MCF 10A (cell line): ENCODE measurements at regions of chr4 and their contacts with region 1.

Region 1: GRCh38 chr4:1792832-1793495 is at the start of gene FGFR3:
- DNase-seq: peak; percentile 41
- H3K4me3 Mint-ChIP-seq: peak within 1 kb of the TSS; percentile 39
- H3K27ac Mint-ChIP-seq: no peak within 1 kb of the TSS
- H3K4me1 Mint-ChIP-seq: peaks cover 9% of the 10 kb centered on the region
- H3K27me3 Mint-ChIP-seq: no peaks in the 10 kb centered on the region
- CTCF ChIP-seq: no peak
- total RNA-seq, gene FGFR3: 2.5 and 6.5 TPM in 2 replicates

Region 2: DNA sequence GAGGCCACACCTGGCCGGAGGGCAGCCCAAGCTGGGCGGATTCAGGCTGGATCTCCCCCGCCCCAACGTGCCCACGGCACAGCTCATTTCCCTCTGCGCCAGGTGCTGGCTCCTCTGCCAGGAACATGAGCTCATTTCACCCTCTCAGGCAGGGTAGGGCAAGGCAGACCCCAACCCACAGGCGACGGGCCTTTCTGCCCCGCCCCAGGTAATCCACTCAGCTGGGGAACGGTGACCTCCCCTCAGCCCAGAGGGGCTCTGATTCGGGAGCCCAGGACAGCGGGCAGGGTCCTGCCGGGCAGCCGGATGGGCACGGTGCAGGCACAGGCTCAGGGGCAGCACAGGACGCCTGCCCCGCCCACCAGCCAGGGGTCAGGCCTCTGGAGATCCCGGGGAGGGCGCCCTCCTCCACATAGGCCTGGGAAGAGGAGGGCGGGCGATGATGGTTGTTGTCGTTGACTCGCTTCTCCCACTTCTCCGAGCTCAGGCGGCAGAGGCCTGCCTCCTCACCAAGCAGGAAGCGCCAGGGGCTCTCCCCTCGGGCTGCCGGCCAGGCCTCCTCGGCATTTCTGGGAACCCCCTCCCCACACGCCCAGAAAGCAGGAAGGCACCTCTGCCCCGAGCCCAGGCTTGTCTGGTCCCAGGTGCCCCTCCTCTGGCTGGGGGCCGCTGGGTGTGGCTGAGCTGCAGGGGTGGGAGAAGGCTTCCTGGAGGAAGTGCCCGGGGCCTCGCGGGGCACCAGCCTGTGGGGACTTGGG is 40.5 kb before region 1 on chr4:
- CTCF ChIA-PET with region 1: interaction called, 10 read pairs
- POLR2A ChIA-PET with region 1: interaction called, 22 read pairs
- intact Hi-C with region 1: loop called (anchors 5 kb)
- DNase-seq: peak; percentile 70
- H3K4me3 Mint-ChIP-seq: no peak overlapping the region
- H3K27ac Mint-ChIP-seq: no peak overlapping the region
- H3K4me1 Mint-ChIP-seq: no peaks in the 10 kb centered on the region
- H3K27me3 Mint-ChIP-seq: no peaks in the 10 kb centered on the region
- CTCF ChIP-seq: no peak

Region 3: GRCh38 chr4:2172161-2172560 is 379.2 kb after region 1 on chr4:
- CTCF ChIA-PET with region 1: no interaction called
- POLR2A ChIA-PET with region 1: no interaction called
- intact Hi-C with region 1: no loop called
- DNase-seq: no peak
- H3K4me3 Mint-ChIP-seq: no peak overlapping the region
- H3K27ac Mint-ChIP-seq: no peak overlapping the region
- H3K4me1 Mint-ChIP-seq: no peaks in the 10 kb centered on the region
- H3K27me3 Mint-ChIP-seq: no peaks in the 10 kb centered on the region
- CTCF ChIP-seq: no peak